AG04450 (cell line): ENCODE measurements at regions of chr13 and their contacts with region 1.

Region 1: DNA sequence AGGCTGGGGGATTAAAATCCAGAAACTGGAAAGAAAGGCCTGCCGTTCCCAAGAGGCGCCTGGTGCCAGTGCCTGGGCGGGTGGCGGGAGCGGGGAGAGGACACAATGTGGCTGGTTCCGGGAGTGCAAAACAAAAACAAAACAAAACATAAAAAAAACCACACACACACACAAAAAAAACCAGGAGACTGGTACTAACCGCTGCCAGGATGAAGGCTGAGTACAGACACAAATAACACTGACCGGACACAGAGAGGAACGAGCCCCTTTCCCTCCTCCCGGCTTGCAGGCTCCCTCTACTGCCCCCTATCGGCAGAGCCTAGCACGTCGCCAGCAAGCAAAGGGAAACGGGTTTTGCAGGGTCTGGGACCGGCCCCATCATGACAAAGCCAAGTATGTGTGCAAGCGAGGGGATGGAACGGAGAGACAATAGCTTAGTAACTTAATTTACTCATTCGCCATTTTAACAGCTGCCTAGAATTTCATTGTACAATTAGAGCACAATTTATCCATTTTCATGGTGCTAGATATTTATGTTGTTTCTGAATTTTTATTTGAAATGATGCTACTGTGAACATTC is 17.9 kb upstream of the ZDHHC20 start:
- DNase-seq: peak; percentile 37
- H3K4me3 ChIP-seq: peak overlapping the region; percentile 47
- H3K27ac ChIP-seq: no peak overlapping the region
- H3K27me3 ChIP-seq: peaks cover 3% of the 10 kb centered on the region
- CTCF ChIP-seq: peak; percentile 97

Region 2: DNA sequence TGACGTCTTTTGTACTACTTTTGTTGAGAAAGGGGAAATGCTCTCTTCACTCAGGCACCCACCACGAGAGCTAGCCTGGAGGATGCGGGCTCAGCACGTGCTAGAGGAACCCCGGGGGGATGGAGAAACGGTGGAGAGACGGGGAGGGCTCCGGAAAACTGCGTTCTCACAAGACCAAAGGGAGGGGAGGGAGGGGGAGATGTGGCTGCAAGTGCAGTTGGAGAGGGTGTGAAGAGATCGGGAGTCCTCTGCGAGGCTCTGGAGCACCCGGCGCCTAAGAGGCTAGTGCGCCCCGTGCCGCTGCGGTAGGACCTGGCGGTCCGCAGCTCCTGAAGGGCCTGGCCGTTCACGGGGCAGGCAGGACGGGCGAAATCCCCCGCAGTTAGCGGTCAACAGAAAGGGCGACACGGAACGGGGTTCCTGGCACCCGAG is 531.0 kb before region 1 on chr13:
- CTCF ChIA-PET with region 1: interaction called, 10 read pairs
- POLR2A ChIA-PET with region 1: no interaction called
- DNase-seq: no peak
- H3K4me3 ChIP-seq: no peak overlapping the region
- H3K27ac ChIP-seq: no peak overlapping the region
- H3K27me3 ChIP-seq: no peaks in the 10 kb centered on the region
- CTCF ChIP-seq: no peak

Region 3: DNA sequence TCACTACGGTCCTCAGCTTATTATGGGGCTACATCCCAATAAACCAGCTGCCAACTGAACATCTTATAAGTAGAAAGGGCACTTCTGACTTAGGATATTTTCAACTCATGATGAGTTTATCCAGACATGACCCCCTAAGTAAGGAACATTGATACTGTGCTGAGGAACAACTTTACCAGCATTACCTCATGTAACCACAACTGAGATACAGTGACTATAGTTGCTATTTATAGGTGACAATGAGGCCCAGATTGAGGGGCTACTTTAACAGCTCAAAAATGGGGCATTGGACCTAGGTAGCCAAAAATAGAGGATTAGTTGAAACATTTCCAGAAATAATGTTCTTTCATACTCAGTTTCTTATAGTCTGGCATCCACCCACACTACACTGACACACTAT is 327.4 kb before region 1 on chr13:
- CTCF ChIA-PET with region 1: interaction called, 11 read pairs
- POLR2A ChIA-PET with region 1: no interaction called
- DNase-seq: no peak
- H3K4me3 ChIP-seq: no peak overlapping the region
- H3K27ac ChIP-seq: no peak overlapping the region
- H3K27me3 ChIP-seq: no peaks in the 10 kb centered on the region
- CTCF ChIP-seq: no peak

Region 4: DNA sequence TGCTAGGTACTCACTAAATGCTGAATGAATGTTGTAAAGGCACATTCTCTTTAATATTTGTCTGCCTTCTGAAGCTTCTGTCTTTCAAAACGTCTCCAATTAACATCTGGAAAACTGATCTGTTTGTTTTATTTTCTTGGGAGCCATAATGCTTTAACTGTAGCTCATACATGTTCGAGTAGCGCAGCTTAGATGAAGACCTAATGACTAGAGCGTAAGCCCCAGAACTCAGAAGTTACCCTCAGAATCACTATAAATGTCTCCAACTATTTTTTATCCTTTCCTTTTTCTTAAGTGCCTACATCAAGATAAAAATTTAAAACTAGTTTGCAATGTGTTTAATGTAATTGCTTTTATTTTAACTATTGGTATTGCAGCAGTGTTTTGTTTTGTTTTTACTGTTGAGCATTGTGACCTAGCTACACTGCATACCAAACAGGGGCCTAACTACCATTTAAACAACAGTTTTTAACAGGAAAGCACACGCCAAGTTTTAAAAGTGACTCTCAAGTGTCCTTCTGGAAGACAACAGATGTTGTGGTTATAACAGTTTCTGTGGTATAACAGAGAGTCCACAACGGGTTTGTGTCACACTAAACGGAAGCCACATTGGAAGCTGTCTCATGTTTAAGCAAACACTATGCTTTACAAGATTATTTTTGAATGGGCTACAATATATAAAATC is 258.5 kb before region 1 on chr13:
- CTCF ChIA-PET with region 1: interaction called, 10 read pairs
- POLR2A ChIA-PET with region 1: no interaction called
- DNase-seq: no peak
- H3K4me3 ChIP-seq: no peak overlapping the region
- H3K27ac ChIP-seq: no peak overlapping the region
- H3K27me3 ChIP-seq: peaks cover 7% of the 10 kb centered on the region
- CTCF ChIP-seq: no peak

Region 5: DNA sequence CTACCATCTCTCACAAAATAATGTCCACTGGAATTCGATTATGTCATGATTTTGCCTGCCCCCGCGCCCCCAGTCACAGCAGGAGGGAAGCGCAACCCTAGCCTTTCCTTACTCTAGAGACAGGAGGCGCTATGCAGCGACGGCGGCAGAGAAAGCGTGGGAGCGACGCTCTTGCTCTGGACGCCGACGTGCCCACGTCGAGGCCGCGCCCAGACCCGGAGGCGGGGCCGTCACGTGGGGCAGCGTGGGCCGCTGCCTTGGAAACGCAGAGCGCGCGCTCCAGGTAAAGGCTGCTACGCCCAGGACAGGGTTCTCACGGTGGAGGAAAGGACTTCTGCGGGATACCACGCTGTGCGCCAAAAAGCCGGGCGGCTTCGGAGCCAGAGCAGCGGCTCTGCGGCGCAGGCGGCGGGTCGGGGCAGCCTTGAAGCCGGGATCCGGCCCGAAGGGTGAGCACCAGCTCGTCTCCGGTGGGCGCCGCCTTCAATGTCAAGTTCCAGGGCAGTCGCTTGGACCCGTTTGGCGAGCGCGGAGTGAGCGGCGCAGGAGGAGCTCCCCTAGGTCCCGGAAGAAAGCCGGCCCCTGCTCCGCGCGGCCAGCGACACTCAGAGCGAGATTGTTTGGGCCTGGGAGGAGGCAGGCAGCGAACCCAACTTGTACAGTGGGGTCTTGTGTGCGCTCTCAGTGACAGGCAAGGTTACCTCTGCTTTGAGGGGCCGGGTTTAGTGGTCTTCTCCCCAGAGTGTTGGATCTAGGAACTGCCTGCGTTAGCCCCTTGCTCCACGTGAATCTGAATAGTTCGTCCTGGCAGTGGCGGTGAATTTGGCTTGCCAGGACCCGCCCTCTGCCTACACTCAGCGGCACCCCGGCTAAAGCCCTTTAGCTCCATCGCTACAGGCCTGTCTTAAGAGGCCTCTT is 178.8 kb before region 1 on chr13:
- CTCF ChIA-PET with region 1: interaction called, 110 read pairs
- POLR2A ChIA-PET with region 1: no interaction called
- DNase-seq: peak; percentile 69
- H3K4me3 ChIP-seq: peak overlapping the region; percentile 87
- H3K27ac ChIP-seq: no peak overlapping the region
- H3K27me3 ChIP-seq: no peaks in the 10 kb centered on the region
- CTCF ChIP-seq: peak; percentile 91

Region 6: GRCh38 chr13:21458813-21459701 is 17.9 kb before region 1 on chr13 and contains the start of gene ZDHHC20:
- CTCF ChIA-PET with region 1: interaction called, 37 read pairs
- POLR2A ChIA-PET with region 1: interaction called, 3 read pairs
- DNase-seq: peak; percentile 38
- H3K4me3 ChIP-seq: peak within 1 kb of the TSS; percentile 91
- H3K27ac ChIP-seq: peak within 1 kb of the TSS; percentile 57
- H3K27me3 ChIP-seq: peaks cover 3% of the 10 kb centered on the region
- CTCF ChIP-seq: no peak
- polyA plus RNA-seq, gene ZDHHC20: 43.8 and 59.8 TPM in 2 replicates

Region 7: DNA sequence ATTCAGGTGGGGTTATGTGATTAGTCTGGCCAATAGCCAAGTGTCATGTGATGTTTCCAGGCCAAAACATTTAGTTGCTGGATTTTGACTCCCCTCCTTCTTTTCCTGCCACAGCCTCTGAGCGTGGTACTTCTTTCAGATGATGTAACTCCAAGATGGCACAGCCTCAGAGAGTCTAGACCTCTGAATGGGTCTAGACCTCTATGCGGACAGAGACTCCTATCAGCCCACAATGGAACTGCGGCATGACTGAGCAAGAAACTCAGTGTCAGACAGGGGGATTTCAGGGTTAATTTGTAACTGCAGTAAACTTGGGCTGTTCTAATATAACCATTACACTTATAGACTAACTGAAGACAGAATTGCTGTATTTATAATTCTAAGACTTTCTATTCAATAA is 24.7 kb after region 1 on chr13:
- CTCF ChIA-PET with region 1: interaction called, 23 read pairs
- POLR2A ChIA-PET with region 1: no interaction called
- DNase-seq: no peak
- H3K4me3 ChIP-seq: no peak overlapping the region
- H3K27ac ChIP-seq: no peak overlapping the region
- H3K27me3 ChIP-seq: no peaks in the 10 kb centered on the region
- CTCF ChIP-seq: no peak

Region 8: DNA sequence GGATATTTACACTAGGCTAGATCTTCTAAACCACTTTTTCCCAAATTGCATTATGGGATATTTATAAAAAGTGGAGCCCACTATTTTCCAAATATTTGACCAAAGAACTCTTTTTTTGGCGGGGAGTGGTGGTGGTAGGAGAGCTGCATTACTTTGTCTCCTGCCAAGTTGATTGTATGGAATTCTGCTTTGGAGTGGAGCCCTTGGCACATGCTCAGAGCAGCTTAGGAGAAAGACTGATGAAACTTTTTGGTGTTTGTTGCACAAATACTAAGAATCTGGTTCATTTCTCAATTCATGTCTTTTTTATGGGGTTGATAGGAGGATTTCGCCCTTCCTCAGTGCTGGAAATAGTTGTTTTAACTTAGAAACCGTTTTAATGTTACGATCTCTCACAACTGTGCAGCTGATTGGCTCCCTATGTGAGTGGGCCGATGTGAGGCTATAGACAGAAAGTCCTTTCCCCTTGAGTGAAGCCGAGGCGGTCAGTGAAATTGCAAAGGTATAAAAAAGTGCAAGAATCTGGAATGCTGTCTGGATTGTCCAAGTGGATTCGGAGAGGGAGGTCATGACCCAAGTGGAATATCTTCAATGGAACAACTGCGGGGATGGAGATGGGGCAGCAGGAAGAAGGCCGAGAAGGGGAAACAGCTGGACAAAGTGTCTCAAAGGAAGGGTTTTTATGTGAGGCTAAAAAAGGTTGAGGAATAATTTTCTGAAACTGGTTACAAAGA is 609.8 kb after region 1 on chr13:
- CTCF ChIA-PET with region 1: no interaction called
- POLR2A ChIA-PET with region 1: no interaction called
- DNase-seq: no peak
- H3K4me3 ChIP-seq: no peak overlapping the region
- H3K27ac ChIP-seq: no peak overlapping the region
- H3K27me3 ChIP-seq: no peaks in the 10 kb centered on the region
- CTCF ChIP-seq: no peak